PC-9 (cell line): ENCODE measurements at regions of chr2 and their contacts with region 1.

Region 1: GRCh38 chr2:74833418-74834233 is at the start of gene HK2:
- DNase-seq: peak; percentile 78 to 84
- H3K4me3 ChIP-seq: peak within 1 kb of the TSS; percentile 91
- H3K27ac ChIP-seq: peak within 1 kb of the TSS; percentile 84
- H3K4me1 ChIP-seq: peaks cover 41% of the 10 kb centered on the region
- H3K27me3 ChIP-seq: no peaks in the 10 kb centered on the region
- CTCF ChIP-seq: no peak
- total RNA-seq, gene HK2: 7.8 and 13.5 TPM in 2 replicates

Region 2: GRCh38 chr2:74715078-74715791 is 118.4 kb before region 1 on chr2:
- CTCF ChIA-PET with region 1: interaction called, 3 read pairs
- POLR2A ChIA-PET with region 1: no interaction called
- intact Hi-C with region 1: loop called (anchors 1 kb)
- DNase-seq: peak; percentile 77 to 80
- H3K4me3 ChIP-seq: peak overlapping the region; percentile 72
- H3K27ac ChIP-seq: peak overlapping the region; percentile 43
- H3K4me1 ChIP-seq: peaks cover 50% of the 10 kb centered on the region
- H3K27me3 ChIP-seq: no peaks in the 10 kb centered on the region
- CTCF ChIP-seq: peak; percentile 97

Region 3: DNA sequence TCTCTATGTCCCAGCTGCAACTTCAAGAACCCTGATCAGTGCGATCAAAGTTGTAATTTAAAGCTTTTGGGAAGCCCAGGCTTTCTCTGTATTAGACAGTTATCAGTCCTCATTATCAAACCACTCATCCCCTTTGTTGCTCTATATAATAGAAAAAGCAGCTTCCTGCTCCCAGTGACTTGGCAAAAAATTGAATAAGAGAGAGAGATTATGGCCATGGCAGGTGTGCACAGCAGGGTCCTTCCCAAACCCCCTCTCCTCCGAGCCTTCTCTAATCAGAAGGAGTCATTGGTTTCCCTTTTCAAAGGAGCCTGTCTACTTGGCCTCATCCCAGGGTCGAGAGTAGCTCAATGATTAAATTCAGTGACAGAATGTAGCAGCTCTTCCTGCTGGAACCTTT is 98.1 kb before region 1 on chr2:
- CTCF ChIA-PET with region 1: interaction called, 13 read pairs
- POLR2A ChIA-PET with region 1: no interaction called
- intact Hi-C with region 1: no loop called
- DNase-seq: no peak
- H3K4me3 ChIP-seq: no peak overlapping the region
- H3K27ac ChIP-seq: peak overlapping the region; percentile 75
- H3K4me1 ChIP-seq: peaks cover 45% of the 10 kb centered on the region
- H3K27me3 ChIP-seq: no peaks in the 10 kb centered on the region
- CTCF ChIP-seq: no peak

Region 4: GRCh38 chr2:74845217-74846011 is 11.8 kb after region 1 on chr2:
- CTCF ChIA-PET with region 1: interaction called, 4 read pairs
- POLR2A ChIA-PET with region 1: interaction called, 3 read pairs
- intact Hi-C with region 1: loop called (anchors 1 kb)
- DNase-seq: peak; percentile 91 to 99
- H3K4me3 ChIP-seq: peak overlapping the region; percentile 37; the same call in 1 of the 2 replicates
- H3K27ac ChIP-seq: peak overlapping the region; percentile 98
- H3K4me1 ChIP-seq: peaks cover 94% of the 10 kb centered on the region
- H3K27me3 ChIP-seq: no peaks in the 10 kb centered on the region
- CTCF ChIP-seq: no peak

Region 5: GRCh38 chr2:74851191-74851566 is 17.6 kb after region 1 on chr2:
- CTCF ChIA-PET with region 1: interaction called, 4 read pairs
- POLR2A ChIA-PET with region 1: no interaction called
- intact Hi-C with region 1: loop called (anchors 2 kb)
- DNase-seq: peak; percentile 64 to 95
- H3K4me3 ChIP-seq: peak overlapping the region; percentile 11; the same call in 1 of the 2 replicates
- H3K27ac ChIP-seq: peak overlapping the region; percentile 83
- H3K4me1 ChIP-seq: peaks cover 82% of the 10 kb centered on the region
- H3K27me3 ChIP-seq: no peaks in the 10 kb centered on the region
- CTCF ChIP-seq: no peak

Region 6: GRCh38 chr2:74867841-74868658 is 34.4 kb after region 1 on chr2:
- CTCF ChIA-PET with region 1: interaction called, 4 read pairs
- POLR2A ChIA-PET with region 1: interaction called, 4 read pairs
- intact Hi-C with region 1: loop called (anchors 1 kb)
- DNase-seq: peak; percentile 73 to 99
- H3K4me3 ChIP-seq: peak overlapping the region; percentile 23; the same call in 1 of the 2 replicates
- H3K27ac ChIP-seq: peak overlapping the region; percentile 92
- H3K4me1 ChIP-seq: peaks cover 61% of the 10 kb centered on the region
- H3K27me3 ChIP-seq: no peaks in the 10 kb centered on the region
- CTCF ChIP-seq: no peak

Region 7: GRCh38 chr2:74876081-74876886 is 42.7 kb after region 1 on chr2:
- CTCF ChIA-PET with region 1: interaction called, 6 read pairs
- POLR2A ChIA-PET with region 1: no interaction called
- intact Hi-C with region 1: loop called (anchors 1 kb)
- DNase-seq: peak; percentile 35 to 48
- H3K4me3 ChIP-seq: no peak overlapping the region
- H3K27ac ChIP-seq: peak overlapping the region; percentile 39; the same call in 1 of the 2 replicates
- H3K4me1 ChIP-seq: no peaks in the 10 kb centered on the region
- H3K27me3 ChIP-seq: no peaks in the 10 kb centered on the region
- CTCF ChIP-seq: peak; percentile 89